Left ventricle myocardium inferior (tissue), 1 donor: ENCODE measurements at regions of chr16 and their contacts with region 1.

Region 1: DNA sequence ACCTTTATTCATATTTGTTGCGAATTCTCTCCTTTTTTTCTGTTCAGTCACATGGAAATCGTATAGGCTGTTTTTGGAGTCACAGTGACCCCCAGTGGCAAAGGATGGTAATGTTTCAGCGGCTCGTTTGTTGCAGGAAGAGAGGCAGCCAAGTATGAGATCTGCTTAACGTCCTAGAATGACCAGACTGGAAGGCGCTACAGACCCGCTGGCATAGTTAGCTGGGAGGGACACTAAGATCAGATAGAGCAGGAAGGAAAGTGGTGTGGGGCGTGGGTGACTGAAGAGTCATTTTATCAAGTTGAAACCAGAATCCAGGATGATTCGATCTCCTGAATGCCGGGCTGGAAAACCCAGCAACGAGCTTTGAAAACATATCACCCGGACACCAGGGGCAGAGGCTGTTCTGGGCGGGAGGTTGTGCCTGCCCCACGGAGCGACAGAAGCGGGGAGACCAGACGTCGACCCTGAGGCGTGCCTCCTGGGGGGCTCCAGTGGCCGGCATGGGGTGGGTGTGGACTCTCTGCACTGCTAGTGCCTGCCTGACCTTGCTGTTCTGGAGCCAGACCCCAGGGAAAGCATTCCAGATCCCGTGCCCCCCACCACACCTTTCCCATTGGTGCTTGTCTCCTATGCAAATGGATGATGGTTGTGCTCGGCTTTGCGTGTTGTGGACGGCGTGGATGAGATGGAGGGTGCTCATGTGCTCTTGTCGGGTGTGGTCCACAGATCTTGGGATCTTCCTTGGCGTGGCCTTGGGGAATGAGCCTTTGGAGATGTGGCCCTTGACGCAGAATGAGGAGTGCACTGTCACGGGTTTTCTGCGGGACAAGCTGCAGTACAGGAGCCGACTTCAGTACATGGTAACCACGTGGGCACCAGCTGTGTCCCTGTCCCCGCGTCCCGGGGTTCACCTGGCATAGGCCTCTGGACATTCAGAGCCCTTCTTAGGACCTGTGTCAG is 7.7 kb downstream of the IL34 start:
- DNase-seq: peak; percentile 79
- H3K4me3 ChIP-seq: peak overlapping the region; percentile 58
- H3K27ac ChIP-seq: peak overlapping the region; percentile 61
- H3K4me1 ChIP-seq: peaks cover 10% of the 10 kb centered on the region
- H3K27me3 ChIP-seq: no peaks in the 10 kb centered on the region
- CTCF ChIP-seq: peak; percentile 94

Region 2: DNA sequence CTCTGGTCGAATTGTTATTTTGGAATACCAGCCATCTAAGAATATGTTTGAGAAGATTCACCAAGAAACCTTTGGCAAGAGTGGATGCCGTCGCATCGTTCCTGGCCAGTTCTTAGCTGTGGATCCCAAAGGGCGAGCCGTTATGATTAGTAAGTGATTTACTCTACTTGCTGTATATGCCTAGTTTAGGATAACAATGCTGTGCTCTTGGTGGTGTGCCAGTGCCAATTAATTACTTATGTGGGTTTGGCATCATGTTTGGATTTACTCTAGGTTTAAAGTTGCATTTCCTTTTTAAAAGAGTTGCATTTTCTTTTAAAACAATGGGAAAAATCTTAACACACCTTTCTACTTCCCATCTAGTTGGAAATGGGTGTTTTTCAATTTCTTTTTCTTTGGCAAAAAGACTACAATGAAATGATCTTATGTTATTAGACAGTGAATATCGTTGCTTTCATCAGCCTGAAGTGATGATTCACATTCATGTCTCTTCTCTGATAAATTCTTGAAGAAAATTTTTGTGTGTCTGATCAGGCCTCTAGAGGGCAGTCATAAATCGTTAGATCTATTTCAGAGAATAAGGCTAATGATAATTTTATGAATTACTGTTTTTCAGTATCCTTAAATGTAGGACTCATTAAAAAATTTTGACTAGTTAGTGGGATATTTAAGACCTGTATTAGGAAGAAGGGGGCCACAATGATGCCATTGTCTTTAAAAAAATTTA is 124.9 kb before region 1 on chr16:
- intact Hi-C with region 1: loop called (anchors 5 kb)
- DNase-seq: no peak
- H3K4me3 ChIP-seq: no peak overlapping the region
- H3K27ac ChIP-seq: no peak overlapping the region
- H3K4me1 ChIP-seq: peaks cover 61% of the 10 kb centered on the region
- H3K27me3 ChIP-seq: no peaks in the 10 kb centered on the region
- CTCF ChIP-seq: peak; percentile 68

Region 3: GRCh38 chr16:70589998-70590471 is 64.1 kb before region 1 on chr16:
- intact Hi-C with region 1: no loop called
- DNase-seq: peak; percentile 51
- H3K4me3 ChIP-seq: peak overlapping the region; percentile 10
- H3K27ac ChIP-seq: peak overlapping the region; percentile 79
- H3K4me1 ChIP-seq: peaks cover 56% of the 10 kb centered on the region
- H3K27me3 ChIP-seq: no peaks in the 10 kb centered on the region
- CTCF ChIP-seq: no peak